Heart right ventricle (tissue), 16 donors: ENCODE measurements at regions of chr4 and their contacts with region 1.

Region 1: GRCh38 chr4:3880615-3881120 is 114.5 kb downstream of the ADRA2C start:
- DNase-seq: peak; percentile 63 to 71
- ATAC-seq: peak; percentile 83 to 93 (median 90)
- H3K4me3 ChIP-seq: no peak overlapping the region
- H3K27ac ChIP-seq: no peak overlapping the region
- H3K4me1 ChIP-seq: peaks cover 0 to 17% (median 10%) of the 10 kb centered on the region in 9 donors
- H3K27me3 ChIP-seq: peaks cover 5 to 83% (median 70%) of the 10 kb centered on the region in 7 donors
- CTCF ChIP-seq: peak; percentile 49 to 76 (median 71)

Region 2: GRCh38 chr4:3563403-3563802 is 317.3 kb before region 1 on chr4:
- intact Hi-C with region 1: loop called in 1 of 10 experiments (anchors 10 kb)
- DNase-seq: no peak
- ATAC-seq: no peak
- H3K4me3 ChIP-seq: no peak overlapping the region
- H3K27ac ChIP-seq: no peak overlapping the region
- H3K4me1 ChIP-seq: no peaks in the 10 kb centered on the region
- H3K27me3 ChIP-seq: peaks cover 0 to 3% (median 0%) of the 10 kb centered on the region in 7 donors
- CTCF ChIP-seq: no peak

Region 3: DNA sequence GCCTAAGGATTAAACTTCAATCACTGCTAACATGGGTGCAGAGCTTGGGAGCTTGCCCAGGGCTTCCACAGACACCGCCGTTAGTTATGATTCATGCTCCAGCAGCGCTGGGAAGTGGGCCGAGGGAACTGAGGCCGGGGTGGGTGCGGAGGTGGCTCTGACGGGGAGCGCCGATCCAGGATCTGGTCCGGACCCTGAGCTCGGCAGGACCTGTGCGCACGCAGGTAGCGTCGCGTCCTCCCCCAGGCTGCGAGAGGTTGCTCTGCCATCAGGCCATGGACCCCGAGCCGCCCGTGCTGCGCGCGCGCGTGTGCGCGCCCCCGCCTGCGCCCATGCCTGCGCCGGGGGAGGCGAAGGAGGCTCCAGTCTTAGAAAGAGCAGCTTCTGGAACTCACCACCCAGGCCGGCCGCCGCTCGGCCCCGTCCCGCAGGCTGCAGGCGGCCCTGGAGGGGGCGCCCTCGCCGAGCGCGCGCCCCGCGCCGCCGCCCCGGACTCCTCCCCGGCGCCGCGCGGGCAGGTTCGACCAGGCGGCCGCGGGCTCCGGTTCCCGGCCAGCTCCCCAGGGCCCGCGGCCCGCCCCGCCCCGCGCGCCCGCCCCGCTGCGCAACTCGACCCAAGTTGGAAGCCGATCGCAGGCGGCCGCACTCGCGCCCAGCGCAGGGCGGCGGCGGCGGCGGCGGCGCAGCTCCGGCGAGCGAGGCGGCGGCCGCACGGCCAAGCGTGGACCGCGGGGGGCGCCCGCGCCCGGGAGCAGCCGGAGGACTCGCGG is 115.2 kb before region 1 on chr4:
- intact Hi-C with region 1: loop called in 3 of 10 experiments (anchors 5 to 10 kb)
- DNase-seq: peak; percentile 20 to 31
- ATAC-seq: peak; percentile 30 to 68 (median 54)
- H3K4me3 ChIP-seq: peak overlapping the region; percentile 10 to 53 (median 44)
- H3K27ac ChIP-seq: peak overlapping the region in 6 of 10 donors; percentile 15 to 48 (median 36)
- H3K4me1 ChIP-seq: peaks cover 0 to 11% (median 5%) of the 10 kb centered on the region in 9 donors
- H3K27me3 ChIP-seq: peaks cover 0 to 61% (median 48%) of the 10 kb centered on the region in 7 donors
- CTCF ChIP-seq: peak in 6 of 9 donors; percentile 7 to 45 (median 24)

Region 4: DNA sequence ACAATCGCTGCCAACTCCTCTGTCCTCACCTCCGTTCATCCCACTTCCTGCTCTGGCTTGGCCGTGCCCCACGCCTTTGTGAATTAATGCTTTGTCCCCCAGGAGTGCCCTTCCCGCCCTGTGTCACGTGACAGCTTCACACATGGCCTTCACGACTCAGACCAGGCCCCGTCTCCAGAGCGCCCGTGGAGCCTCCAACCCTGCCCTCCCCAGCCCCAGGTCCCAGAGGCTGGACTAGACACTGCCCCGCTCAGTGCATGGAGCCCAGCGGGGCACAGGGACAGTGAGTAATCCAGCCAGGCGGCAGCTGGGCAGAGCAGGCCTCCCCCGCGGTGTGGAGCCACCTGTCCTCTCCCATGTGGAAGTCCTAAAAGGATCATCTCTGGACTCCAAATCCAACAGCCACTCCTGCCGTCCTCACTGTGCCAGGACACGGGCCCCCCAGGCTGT is 107.1 kb before region 1 on chr4:
- intact Hi-C with region 1: loop called in 3 of 10 experiments (anchors 5 to 10 kb)
- DNase-seq: no peak
- ATAC-seq: peak in 1 of 8 donors; percentile 12
- H3K4me3 ChIP-seq: no peak overlapping the region
- H3K27ac ChIP-seq: no peak overlapping the region
- H3K4me1 ChIP-seq: no peaks in the 10 kb centered on the region
- H3K27me3 ChIP-seq: peaks cover 0 to 74% (median 58%) of the 10 kb centered on the region in 7 donors
- CTCF ChIP-seq: no peak